ENCODE measurements at regions of chr1 and their contacts with region 1.

Region 1: DNA sequence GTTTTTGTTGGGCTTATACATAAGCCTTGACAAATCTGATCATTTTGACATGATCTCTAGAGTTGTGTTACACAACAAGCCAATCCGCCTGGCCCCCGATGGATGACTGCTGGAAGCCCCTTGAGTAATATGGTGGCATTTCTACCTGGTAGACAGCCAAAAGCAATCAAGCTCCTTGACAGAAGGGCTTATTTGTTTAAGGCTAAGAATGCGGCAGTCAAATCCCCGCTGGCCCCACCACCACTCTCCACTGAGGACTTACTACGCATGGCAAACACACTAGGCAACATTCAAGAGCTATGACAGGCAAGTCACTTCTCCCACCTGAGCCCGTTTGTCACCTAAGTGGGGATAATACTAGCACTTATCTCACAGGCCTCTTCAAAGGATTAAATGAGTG is 33.4 kb upstream of the C1orf198 start:
- DNase-seq: no peak
- ATAC-seq: no peak
- H3K4me3 ChIP-seq: no peak overlapping the region
- H3K4me3 Mint-ChIP-seq: no peak overlapping the region
- H3K27ac ChIP-seq: no peak overlapping the region
- H3K27ac Mint-ChIP-seq: no peak overlapping the region
- H3K4me1 ChIP-seq: no peaks in the 10 kb centered on the region
- H3K4me1 Mint-ChIP-seq: peaks cover 0 to 7% (median 0%) of the 10 kb centered on the region in 3 donors
- H3K27me3 ChIP-seq: no peaks in the 10 kb centered on the region
- H3K27me3 Mint-ChIP-seq: no peaks in the 10 kb centered on the region

Region 2: DNA sequence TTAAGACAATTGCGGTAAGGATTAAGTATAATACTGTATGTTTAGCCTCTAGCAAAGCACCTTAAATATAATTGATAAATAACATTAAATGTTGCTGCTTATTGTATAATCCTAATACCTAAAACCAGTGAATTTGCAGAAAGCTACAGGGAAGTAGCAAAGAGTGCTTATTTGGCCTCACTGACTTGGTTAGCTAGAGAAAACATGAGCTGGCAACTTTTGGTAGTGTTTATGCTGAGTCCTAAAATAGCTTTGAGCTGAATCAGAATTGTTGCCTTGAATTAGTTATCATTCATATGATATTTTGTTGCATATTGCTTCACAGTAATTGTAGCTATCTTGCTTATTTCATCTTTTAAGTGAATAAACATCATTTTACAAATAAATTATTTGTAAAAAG is 263.7 kb after region 1 on chr1:
- CTCF ChIA-PET with region 1: interaction called in 1 of 2 experiments, 14 read pairs
- POLR2A ChIA-PET with region 1: no interaction called
- DNase-seq: no peak
- ATAC-seq: no peak
- H3K4me3 ChIP-seq: no peak overlapping the region
- H3K4me3 Mint-ChIP-seq: no peak overlapping the region
- H3K27ac ChIP-seq: no peak overlapping the region
- H3K27ac Mint-ChIP-seq: no peak overlapping the region
- H3K4me1 ChIP-seq: peaks cover 0 to 13% of the 10 kb centered on the region in 2 experiments
- H3K4me1 Mint-ChIP-seq: peaks cover 5 to 16% (median 9%) of the 10 kb centered on the region in 3 donors
- H3K27me3 ChIP-seq: peaks cover 7 to 46% of the 10 kb centered on the region in 2 experiments
- H3K27me3 Mint-ChIP-seq: peaks cover 31 to 52% of the 10 kb centered on the region in 2 donors

Measured in T-cell (primary cell).